Activated B cell treated with CpG ODN at 0.5 μM for 24 hours (primary cell): ENCODE measurements at regions of chr13 and their contacts with region 1.

Region 1: GRCh38 chr13:30617315-30618185 is at the start of gene USPL1:
- DNase-seq: peak; percentile 98
- ATAC-seq: peak; percentile 84
- H3K4me3 Mint-ChIP-seq: no peak within 1 kb of the TSS
- H3K27ac Mint-ChIP-seq: no peak within 1 kb of the TSS
- H3K4me1 Mint-ChIP-seq: peaks cover 37% of the 10 kb centered on the region
- H3K27me3 Mint-ChIP-seq: no peaks in the 10 kb centered on the region
- CTCF ChIP-seq: no peak
- total RNA-seq, gene USPL1: 29.1 and 33.6 TPM in 2 replicates

Region 2: GRCh38 chr13:29850224-29850898 is 767.2 kb before region 1 on chr13 and contains the start of gene UBL3:
- CTCF ChIA-PET with region 1: no interaction called
- POLR2A ChIA-PET with region 1: interaction called, 15 read pairs
- intact Hi-C with region 1: loop called (anchors 1 kb)
- DNase-seq: peak; percentile 84
- ATAC-seq: peak; percentile 90
- H3K4me3 Mint-ChIP-seq: peak within 1 kb of the TSS; percentile 96
- H3K27ac Mint-ChIP-seq: peak within 1 kb of the TSS; percentile 99
- H3K4me1 Mint-ChIP-seq: peaks cover 33% of the 10 kb centered on the region
- H3K27me3 Mint-ChIP-seq: no peaks in the 10 kb centered on the region
- CTCF ChIP-seq: no peak
- total RNA-seq, gene UBL3: 17.9 and 18.6 TPM in 2 replicates

Region 3: GRCh38 chr13:30026093-30026492 is 591.5 kb before region 1 on chr13:
- CTCF ChIA-PET with region 1: no interaction called
- POLR2A ChIA-PET with region 1: no interaction called
- intact Hi-C with region 1: no loop called
- DNase-seq: no peak
- ATAC-seq: no peak
- H3K4me3 Mint-ChIP-seq: no peak overlapping the region
- H3K27ac Mint-ChIP-seq: no peak overlapping the region
- H3K4me1 Mint-ChIP-seq: no peaks in the 10 kb centered on the region
- H3K27me3 Mint-ChIP-seq: no peaks in the 10 kb centered on the region
- CTCF ChIP-seq: no peak

Region 4: GRCh38 chr13:30355384-30355699 is 262.2 kb before region 1 on chr13:
- CTCF ChIA-PET with region 1: no interaction called
- POLR2A ChIA-PET with region 1: no interaction called
- intact Hi-C with region 1: loop called (anchors 5 kb)
- DNase-seq: peak; percentile 61
- ATAC-seq: peak; percentile 100
- H3K4me3 Mint-ChIP-seq: peak overlapping the region; percentile 45
- H3K27ac Mint-ChIP-seq: peak overlapping the region; percentile 77
- H3K4me1 Mint-ChIP-seq: peaks cover 32% of the 10 kb centered on the region
- H3K27me3 Mint-ChIP-seq: no peaks in the 10 kb centered on the region
- CTCF ChIP-seq: no peak

Region 5: DNA sequence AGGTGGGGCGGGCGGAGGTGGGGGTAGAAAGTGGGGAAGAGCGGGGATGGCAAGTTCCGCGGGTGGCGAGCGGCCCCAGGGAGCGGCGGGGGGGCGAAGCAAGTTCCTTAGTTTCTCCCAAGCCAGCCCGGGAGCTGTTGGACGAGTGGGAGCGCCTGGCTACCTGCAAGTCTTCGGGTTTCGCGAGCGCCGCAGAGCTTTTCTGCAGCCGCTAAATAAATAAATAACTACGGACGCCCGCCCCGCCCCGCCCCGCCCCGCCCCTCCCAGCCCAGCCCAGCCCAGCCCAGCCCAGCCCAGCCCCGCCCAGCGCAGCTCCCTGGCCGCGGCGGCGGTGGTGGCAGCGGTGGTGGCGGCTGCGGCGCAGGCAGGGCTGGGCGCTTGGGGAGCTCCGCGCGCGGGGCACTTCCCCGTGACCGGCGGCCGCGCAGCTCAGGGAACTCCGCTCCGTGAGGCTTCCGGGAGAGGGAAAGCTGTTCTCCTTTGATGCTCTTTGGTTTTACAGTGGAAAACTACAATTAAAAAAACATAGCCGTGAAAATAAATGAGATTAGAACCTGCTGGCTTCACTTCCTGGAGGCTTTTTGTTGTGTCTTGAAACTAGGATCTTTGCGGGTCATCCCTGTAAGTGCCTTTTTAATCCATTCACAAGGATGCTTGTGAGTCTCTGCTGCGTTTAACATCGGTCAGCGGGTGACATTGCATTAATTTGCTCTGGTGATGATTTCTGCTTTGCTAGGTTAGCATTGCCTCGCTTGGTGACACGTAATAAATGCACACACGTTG is 195.3 kb before region 1 on chr13 and contains the start of gene UBE2L5:
- CTCF ChIA-PET with region 1: no interaction called
- POLR2A ChIA-PET with region 1: interaction called, 11 read pairs
- intact Hi-C with region 1: loop called (anchors 2 kb)
- DNase-seq: peak; percentile 75
- ATAC-seq: peak; percentile 94
- H3K4me3 Mint-ChIP-seq: peak within 1 kb of the TSS; percentile 88
- H3K27ac Mint-ChIP-seq: peak within 1 kb of the TSS; percentile 94
- H3K4me1 Mint-ChIP-seq: peaks cover 43% of the 10 kb centered on the region
- H3K27me3 Mint-ChIP-seq: no peaks in the 10 kb centered on the region
- CTCF ChIP-seq: no peak
- total RNA-seq, gene UBE2L5: 0.24 and 0.42 TPM in 2 replicates

Region 6: DNA sequence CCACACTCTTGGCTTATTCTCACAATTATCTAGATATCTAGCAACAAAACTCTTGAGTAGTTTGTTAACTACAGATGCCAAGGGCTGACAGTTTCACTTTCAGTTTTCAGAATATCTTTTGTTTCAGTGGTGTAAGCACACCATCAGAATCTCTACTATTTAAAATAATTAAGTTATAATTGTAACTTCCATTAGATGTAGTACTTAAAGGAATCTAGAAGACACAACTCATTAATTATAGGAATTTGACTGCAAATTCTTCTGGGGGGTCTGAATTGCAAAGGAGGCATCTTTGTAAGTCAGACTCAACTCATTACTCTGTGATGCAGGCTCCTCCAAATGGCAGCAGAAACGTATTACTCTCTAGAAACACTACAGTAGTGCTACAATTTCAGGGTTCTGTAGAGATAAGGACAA is 44.7 kb before region 1 on chr13:
- CTCF ChIA-PET with region 1: no interaction called
- POLR2A ChIA-PET with region 1: interaction called, 14 read pairs
- intact Hi-C with region 1: loop called (anchors 2 kb)
- DNase-seq: no peak
- ATAC-seq: peak; percentile 83
- H3K4me3 Mint-ChIP-seq: peak overlapping the region; percentile 64
- H3K27ac Mint-ChIP-seq: peak overlapping the region; percentile 71
- H3K4me1 Mint-ChIP-seq: peaks cover 23% of the 10 kb centered on the region
- H3K27me3 Mint-ChIP-seq: no peaks in the 10 kb centered on the region
- CTCF ChIP-seq: no peak

Region 7: DNA sequence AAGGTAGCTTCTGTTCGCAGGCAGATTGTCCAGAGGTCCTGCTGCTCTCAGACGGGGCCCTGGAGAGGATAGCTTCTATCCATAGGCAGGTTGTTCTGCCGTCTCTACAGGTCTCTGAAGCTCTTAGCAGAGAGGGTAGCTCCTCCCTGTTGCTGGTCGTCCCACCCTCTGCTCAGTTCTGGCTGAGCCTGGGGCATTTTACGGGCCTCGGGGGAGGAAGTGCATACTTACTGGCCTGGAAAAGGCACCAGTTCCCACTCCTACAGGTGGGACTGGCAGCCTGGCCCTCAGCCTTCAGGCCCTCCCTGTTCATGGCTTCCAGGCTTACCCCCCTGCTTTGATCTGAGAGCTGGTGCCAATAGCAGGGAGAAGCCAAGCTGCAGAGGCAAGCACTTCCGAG is 42.4 kb after region 1 on chr13:
- CTCF ChIA-PET with region 1: interaction called, 3 read pairs
- POLR2A ChIA-PET with region 1: interaction called, 39 read pairs
- intact Hi-C with region 1: loop called (anchors 1 kb)
- DNase-seq: no peak
- ATAC-seq: no peak
- H3K4me3 Mint-ChIP-seq: peak overlapping the region; percentile 53
- H3K27ac Mint-ChIP-seq: peak overlapping the region; percentile 84
- H3K4me1 Mint-ChIP-seq: peaks cover 5% of the 10 kb centered on the region
- H3K27me3 Mint-ChIP-seq: no peaks in the 10 kb centered on the region
- CTCF ChIP-seq: no peak

Region 8: GRCh38 chr13:30802953-30803478 is 185.5 kb after region 1 on chr13:
- CTCF ChIA-PET with region 1: no interaction called
- POLR2A ChIA-PET with region 1: interaction called, 6 read pairs
- intact Hi-C with region 1: loop called (anchors 1 kb)
- DNase-seq: peak; percentile 73
- ATAC-seq: peak; percentile 98
- H3K4me3 Mint-ChIP-seq: peak overlapping the region; percentile 73
- H3K27ac Mint-ChIP-seq: no peak overlapping the region
- H3K4me1 Mint-ChIP-seq: peaks cover 11% of the 10 kb centered on the region
- H3K27me3 Mint-ChIP-seq: no peaks in the 10 kb centered on the region
- CTCF ChIP-seq: peak; percentile 90

Region 9: GRCh38 chr13:31150315-31150985 is 532.9 kb after region 1 on chr13:
- CTCF ChIA-PET with region 1: no interaction called
- POLR2A ChIA-PET with region 1: no interaction called
- intact Hi-C with region 1: no loop called
- DNase-seq: no peak
- ATAC-seq: no peak
- H3K4me3 Mint-ChIP-seq: no peak overlapping the region
- H3K27ac Mint-ChIP-seq: no peak overlapping the region
- H3K4me1 Mint-ChIP-seq: no peaks in the 10 kb centered on the region
- H3K27me3 Mint-ChIP-seq: no peaks in the 10 kb centered on the region
- CTCF ChIP-seq: no peak